ENCODE measurements at regions of chr2 and their contacts with region 1.

Region 1: GRCh38 chr2:127818794-127819425 is 7.9 kb upstream of the WDR33 start:
- DNase-seq: no peak
- ATAC-seq: no peak
- H3K4me3 ChIP-seq: no peak overlapping the region
- H3K4me3 Mint-ChIP-seq: no peak overlapping the region
- H3K27ac ChIP-seq: no peak overlapping the region
- H3K27ac Mint-ChIP-seq: no peak overlapping the region
- H3K4me1 ChIP-seq: no peaks in the 10 kb centered on the region
- H3K4me1 Mint-ChIP-seq: no peaks in the 10 kb centered on the region
- H3K27me3 ChIP-seq: peaks cover 0 to 4% of the 10 kb centered on the region in 2 experiments
- H3K27me3 Mint-ChIP-seq: peaks cover 16% of the 10 kb centered on the region
- CTCF ChIP-seq: no peak

Region 2: DNA sequence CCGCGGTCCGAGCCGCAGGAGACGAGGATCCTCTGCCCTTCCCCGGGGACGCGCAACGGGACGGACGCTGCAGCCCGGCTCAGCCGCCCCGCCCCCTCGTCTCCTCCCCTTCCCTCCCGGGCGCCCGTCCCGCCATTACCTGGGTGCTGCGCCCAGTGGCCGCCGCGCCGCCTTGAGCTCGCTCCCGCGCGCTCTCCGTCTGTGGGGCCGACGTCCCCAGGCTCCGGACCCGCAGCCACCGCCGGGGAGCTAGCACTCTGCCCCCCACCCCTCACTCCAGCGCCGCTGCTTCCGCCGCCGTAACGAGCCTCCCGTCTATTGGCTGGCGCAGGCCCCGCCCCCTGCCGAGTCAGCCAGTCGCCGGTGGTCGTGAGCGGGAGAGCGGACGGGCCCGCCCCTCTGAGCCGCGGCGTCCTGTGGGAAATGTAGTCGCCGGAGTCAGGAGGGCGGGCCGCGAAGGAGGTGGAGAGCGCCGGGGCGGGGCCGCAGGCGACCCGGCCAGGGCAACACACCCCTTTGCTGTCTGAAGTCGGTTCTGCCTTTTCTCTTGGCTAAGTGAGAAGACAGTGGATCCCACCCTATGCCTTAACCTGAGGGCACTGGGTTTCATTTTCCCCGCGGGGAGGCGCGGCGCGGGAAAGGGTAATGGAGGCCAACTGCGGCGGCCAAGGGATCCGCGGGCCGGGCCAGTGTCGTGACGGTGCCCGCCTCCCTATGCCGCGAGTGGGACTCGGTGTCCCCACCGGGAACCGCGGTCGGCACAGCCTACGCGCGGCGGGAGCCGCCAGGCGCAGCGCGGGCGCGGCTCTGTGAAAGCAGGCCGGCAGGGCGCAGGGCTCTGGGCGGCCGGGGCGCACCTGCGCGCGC is 209.1 kb after region 1 on chr2 and contains the start of gene SAP130:
- CTCF ChIA-PET with region 1: no interaction called
- POLR2A ChIA-PET with region 1: no interaction called
- intact Hi-C with region 1: loop called in 1 of 2 experiments (anchors 5 kb)
- DNase-seq: peak; percentile 96 to 99 (median 98)
- ATAC-seq: peak; percentile 76
- H3K4me3 ChIP-seq: peak within 1 kb of the TSS; percentile 77
- H3K4me3 Mint-ChIP-seq: peak within 1 kb of the TSS; percentile 99
- H3K27ac ChIP-seq: peak within 1 kb of the TSS; percentile 85 to 89
- H3K27ac Mint-ChIP-seq: peak within 1 kb of the TSS; percentile 96
- H3K4me1 ChIP-seq: peaks cover 15% of the 10 kb centered on the region
- H3K4me1 Mint-ChIP-seq: peaks cover 30% of the 10 kb centered on the region
- H3K27me3 ChIP-seq: no peaks in the 10 kb centered on the region
- H3K27me3 Mint-ChIP-seq: no peaks in the 10 kb centered on the region
- CTCF ChIP-seq: no peak
- total RNA-seq, gene SAP130: 19.2 to 21.0 TPM